ENCODE measurements at regions of chr5 and their contacts with region 1.

Region 1: DNA sequence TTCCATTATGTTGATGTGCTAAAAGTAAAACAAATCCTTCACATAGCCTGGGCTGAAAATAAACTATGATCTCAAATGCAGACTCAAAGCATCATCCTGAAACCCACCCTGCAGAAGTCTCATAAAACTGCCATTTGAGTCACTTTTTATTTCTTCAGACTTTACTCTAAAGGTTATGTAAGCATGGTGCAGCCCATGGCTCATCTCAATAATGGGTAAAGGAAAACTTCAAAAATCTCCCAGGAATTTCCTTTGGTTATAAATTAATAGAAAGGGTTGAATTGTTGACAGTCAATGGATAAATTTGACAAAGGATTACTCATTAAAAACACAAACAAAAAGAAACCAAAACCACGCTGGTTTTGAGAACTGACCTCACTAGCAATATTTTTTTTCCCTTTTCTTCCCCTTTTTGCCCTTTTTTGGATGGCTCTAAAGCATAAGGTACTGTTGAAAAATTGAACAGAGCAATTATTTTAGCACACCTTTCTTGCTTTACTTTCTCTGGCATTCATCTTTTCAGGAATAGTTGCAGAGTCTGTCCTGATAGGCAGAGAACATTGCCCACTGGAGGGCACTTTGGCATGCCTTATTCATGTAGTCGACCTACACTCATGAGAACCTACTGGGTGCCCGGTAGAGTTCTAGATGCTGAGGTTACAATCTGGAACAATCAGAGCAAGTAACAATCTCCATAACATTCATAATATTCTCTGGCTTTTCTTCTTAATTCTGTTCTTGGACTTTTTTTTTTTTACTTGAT is 191.4 kb downstream of the TMEM167A start:
- DNase-seq: peak; percentile 16
- ATAC-seq: peak; percentile 77
- H3K4me3 ChIP-seq: no peak overlapping the region
- H3K27ac ChIP-seq: no peak overlapping the region
- H3K4me1 ChIP-seq: no peaks in the 10 kb centered on the region; the same call in 1 of the 2 replicates
- H3K27me3 ChIP-seq: no peaks in the 10 kb centered on the region
- CTCF ChIP-seq: peak in 2 of 3 experiments; percentile 15 to 17; a peak in 1 of 6 replicates
- EP300 ChIP-seq: peak in 1 of 2 experiments; percentile 36; a peak in 1 of 4 replicates
- POLR2A ChIP-seq: no peak
- RAD21 ChIP-seq: peak; percentile 41; the same call in 1 of the 2 replicates

Region 2: GRCh38 chr5:82707741-82708140 is 178.1 kb before region 1 on chr5:
- CTCF ChIA-PET with region 1: no interaction called
- POLR2A ChIA-PET with region 1: no interaction called
- RAD21 ChIA-PET with region 1: no interaction called
- SMC1A ChIA-PET with region 1: no interaction called
- in situ Hi-C with region 1: no loop called
- intact Hi-C with region 1: no loop called
- DNase-seq: no peak
- ATAC-seq: no peak
- H3K4me3 ChIP-seq: no peak overlapping the region
- H3K27ac ChIP-seq: no peak overlapping the region
- H3K4me1 ChIP-seq: no peaks in the 10 kb centered on the region
- H3K27me3 ChIP-seq: no peaks in the 10 kb centered on the region
- CTCF ChIP-seq: no peak
- EP300 ChIP-seq: no peak
- POLR2A ChIP-seq: no peak
- RAD21 ChIP-seq: no peak

Region 3: GRCh38 chr5:82820961-82821845 is 64.6 kb before region 1 on chr5:
- CTCF ChIA-PET with region 1: interaction called, 3 read pairs
- POLR2A ChIA-PET with region 1: no interaction called
- RAD21 ChIA-PET with region 1: interaction called, 5 read pairs
- SMC1A ChIA-PET with region 1: interaction called, 5 read pairs
- in situ Hi-C with region 1: no loop called
- intact Hi-C with region 1: loop called (anchors 2 kb)
- DNase-seq: no peak
- ATAC-seq: peak; percentile 75
- H3K4me3 ChIP-seq: peak overlapping the region; percentile 33; the same call in 1 of the 2 replicates
- H3K27ac ChIP-seq: peak overlapping the region; percentile 62
- H3K4me1 ChIP-seq: peaks cover 13% of the 10 kb centered on the region
- H3K27me3 ChIP-seq: no peaks in the 10 kb centered on the region
- CTCF ChIP-seq: no peak
- EP300 ChIP-seq: no peak
- POLR2A ChIP-seq: no peak
- RAD21 ChIP-seq: no peak

Region 4: GRCh38 chr5:83000428-83000827 is 114.6 kb after region 1 on chr5:
- CTCF ChIA-PET with region 1: no interaction called
- POLR2A ChIA-PET with region 1: no interaction called
- RAD21 ChIA-PET with region 1: no interaction called
- SMC1A ChIA-PET with region 1: no interaction called
- in situ Hi-C with region 1: no loop called
- intact Hi-C with region 1: no loop called
- DNase-seq: no peak
- ATAC-seq: no peak
- H3K4me3 ChIP-seq: no peak overlapping the region
- H3K27ac ChIP-seq: no peak overlapping the region
- H3K4me1 ChIP-seq: no peaks in the 10 kb centered on the region
- H3K27me3 ChIP-seq: no peaks in the 10 kb centered on the region
- CTCF ChIP-seq: no peak
- EP300 ChIP-seq: no peak
- POLR2A ChIP-seq: no peak
- RAD21 ChIP-seq: no peak

Region 5: DNA sequence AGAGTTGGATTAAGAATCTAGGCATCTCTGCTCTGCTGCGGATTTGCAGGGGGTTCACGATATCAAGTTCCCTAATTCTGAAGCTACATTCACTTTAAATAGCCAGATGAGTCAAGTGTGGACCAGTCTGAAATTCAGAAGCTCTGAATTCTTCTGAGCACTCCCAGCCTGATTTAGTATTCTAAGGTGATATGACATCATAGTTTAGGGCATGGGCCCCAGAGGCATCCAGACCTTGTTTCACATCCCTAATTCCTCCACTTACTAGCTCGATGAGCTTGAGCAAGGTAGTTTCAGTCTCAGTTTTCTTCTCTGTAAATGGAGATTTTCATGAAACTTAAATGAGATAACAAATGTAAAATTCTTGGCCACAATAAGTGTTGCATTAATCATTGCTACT is 126.2 kb after region 1 on chr5:
- CTCF ChIA-PET with region 1: no interaction called
- POLR2A ChIA-PET with region 1: no interaction called
- RAD21 ChIA-PET with region 1: no interaction called
- SMC1A ChIA-PET with region 1: interaction called, 4 read pairs
- in situ Hi-C with region 1: no loop called
- intact Hi-C with region 1: loop called (anchors 5 kb)
- DNase-seq: peak; percentile 69
- ATAC-seq: peak; percentile 99
- H3K4me3 ChIP-seq: no peak overlapping the region
- H3K27ac ChIP-seq: no peak overlapping the region; the same call in 1 of the 2 replicates
- H3K4me1 ChIP-seq: peaks cover 5% of the 10 kb centered on the region; the same call in 1 of the 2 replicates
- H3K27me3 ChIP-seq: no peaks in the 10 kb centered on the region
- CTCF ChIP-seq: no peak
- EP300 ChIP-seq: peak in 1 of 2 experiments; percentile 38; a peak in 1 of 4 replicates
- POLR2A ChIP-seq: no peak
- RAD21 ChIP-seq: no peak

Region 6: GRCh38 chr5:83076742-83077661 is 191.2 kb after region 1 on chr5 and contains the starts of genes TMEM167A and XRCC4:
- CTCF ChIA-PET with region 1: interaction called, 3 read pairs
- POLR2A ChIA-PET with region 1: no interaction called
- RAD21 ChIA-PET with region 1: no interaction called
- SMC1A ChIA-PET with region 1: interaction called, 3 read pairs
- in situ Hi-C with region 1: no loop called
- intact Hi-C with region 1: loop called (anchors 2 kb)
- DNase-seq: peak; percentile 96
- ATAC-seq: peak; percentile 98
- H3K4me3 ChIP-seq: peak within 1 kb of the TSS; percentile 87
- H3K27ac ChIP-seq: peak within 1 kb of the TSS; percentile 94
- H3K4me1 ChIP-seq: no peaks in the 10 kb centered on the region
- H3K27me3 ChIP-seq: no peaks in the 10 kb centered on the region
- CTCF ChIP-seq: no peak
- EP300 ChIP-seq: no peak; a peak in 1 of 4 replicates
- POLR2A ChIP-seq: peak; percentile 99
- RAD21 ChIP-seq: peak; percentile 6; the same call in 1 of the 2 replicates
- polyA plus RNA-seq, gene TMEM167A: 314 to 363 TPM
- polyA plus RNA-seq, gene XRCC4: 49.2 to 53.6 TPM

Region 7: DNA sequence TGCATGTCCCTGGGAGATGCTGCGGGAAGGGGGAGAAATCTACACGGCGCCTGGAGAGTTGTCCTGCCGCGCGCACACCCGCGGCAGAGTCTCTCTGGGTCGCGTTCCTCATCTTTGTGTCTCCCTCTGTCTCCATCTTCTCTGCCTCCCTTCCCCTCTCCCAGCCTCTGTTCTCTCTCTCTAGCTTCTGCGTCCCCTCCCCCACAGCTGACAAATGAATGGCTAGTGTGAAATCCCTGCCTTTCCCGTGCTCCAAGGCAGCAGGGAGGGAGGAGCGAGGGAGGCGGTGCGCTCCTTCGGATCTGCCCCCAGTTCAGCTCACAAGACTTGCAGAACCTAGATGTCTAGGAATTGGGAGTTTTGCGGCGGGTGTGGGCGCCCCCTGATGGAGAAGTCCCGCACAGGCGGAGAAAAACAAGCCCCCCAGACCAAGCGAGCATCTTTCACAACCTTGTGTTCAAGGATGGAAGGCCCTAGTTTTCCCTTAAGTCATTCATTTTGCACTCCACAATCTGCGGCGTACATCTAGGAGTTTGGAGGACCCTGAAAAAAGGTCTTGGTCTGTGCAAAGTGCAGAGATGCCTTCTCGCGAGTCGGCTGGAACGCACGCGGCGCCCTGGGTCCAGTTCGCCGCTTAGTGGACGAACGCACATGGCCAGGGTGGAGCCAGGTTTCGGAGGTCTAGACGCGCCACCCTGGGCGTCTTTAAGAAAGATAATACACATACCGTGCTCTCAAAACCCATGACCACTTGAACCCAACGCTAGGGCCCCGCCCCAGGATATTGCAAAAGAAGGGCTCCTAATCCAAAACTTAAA is 587.7 kb after region 1 on chr5:
- CTCF ChIA-PET with region 1: no interaction called
- POLR2A ChIA-PET with region 1: no interaction called
- RAD21 ChIA-PET with region 1: no interaction called
- SMC1A ChIA-PET with region 1: no interaction called
- in situ Hi-C with region 1: no loop called
- intact Hi-C with region 1: loop called (anchors 5 kb)
- DNase-seq: peak; percentile 24
- ATAC-seq: peak; percentile 83
- H3K4me3 ChIP-seq: peak overlapping the region; percentile 78
- H3K27ac ChIP-seq: no peak overlapping the region
- H3K4me1 ChIP-seq: 0 out of 2 replicates have a peak, but pooled peaks cover 10% of the 10 kb centered on the region
- H3K27me3 ChIP-seq: peaks cover 15 to 17% of the 10 kb centered on the region in 2 experiments
- CTCF ChIP-seq: peak; percentile 73 to 85 (median 83)
- EP300 ChIP-seq: no peak
- POLR2A ChIP-seq: no peak
- RAD21 ChIP-seq: peak; percentile 84

Region 8: DNA sequence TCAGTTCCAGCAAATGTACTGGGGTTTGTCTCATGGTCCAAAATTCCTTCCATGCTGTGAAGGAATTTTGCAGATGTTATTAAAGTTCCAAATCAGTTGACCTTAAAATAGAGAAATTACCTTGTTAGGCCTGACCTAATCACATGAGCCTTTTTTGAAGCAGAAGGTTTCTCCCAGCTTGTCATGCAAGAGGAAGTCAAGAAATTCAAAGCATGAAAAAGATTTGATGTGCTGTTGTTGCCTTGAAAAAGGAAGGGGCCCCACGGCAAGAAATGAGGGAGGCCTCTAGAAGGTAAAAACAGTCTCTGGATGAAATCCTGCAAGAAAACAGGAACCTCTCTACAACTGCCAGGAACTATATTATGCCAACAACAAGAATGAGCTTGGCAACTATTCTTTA is 859.0 kb after region 1 on chr5:
- CTCF ChIA-PET with region 1: no interaction called
- POLR2A ChIA-PET with region 1: no interaction called
- RAD21 ChIA-PET with region 1: no interaction called
- SMC1A ChIA-PET with region 1: no interaction called
- in situ Hi-C with region 1: no loop called
- intact Hi-C with region 1: no loop called
- DNase-seq: no peak
- ATAC-seq: no peak
- H3K4me3 ChIP-seq: no peak overlapping the region
- H3K27ac ChIP-seq: no peak overlapping the region
- H3K4me1 ChIP-seq: no peaks in the 10 kb centered on the region
- H3K27me3 ChIP-seq: no peaks in the 10 kb centered on the region
- CTCF ChIP-seq: no peak
- EP300 ChIP-seq: no peak
- POLR2A ChIP-seq: no peak
- RAD21 ChIP-seq: no peak